Endothelial cell of umbilical vein (primary cell): ENCODE measurements at regions of chr1 and their contacts with region 1.

Region 1: DNA sequence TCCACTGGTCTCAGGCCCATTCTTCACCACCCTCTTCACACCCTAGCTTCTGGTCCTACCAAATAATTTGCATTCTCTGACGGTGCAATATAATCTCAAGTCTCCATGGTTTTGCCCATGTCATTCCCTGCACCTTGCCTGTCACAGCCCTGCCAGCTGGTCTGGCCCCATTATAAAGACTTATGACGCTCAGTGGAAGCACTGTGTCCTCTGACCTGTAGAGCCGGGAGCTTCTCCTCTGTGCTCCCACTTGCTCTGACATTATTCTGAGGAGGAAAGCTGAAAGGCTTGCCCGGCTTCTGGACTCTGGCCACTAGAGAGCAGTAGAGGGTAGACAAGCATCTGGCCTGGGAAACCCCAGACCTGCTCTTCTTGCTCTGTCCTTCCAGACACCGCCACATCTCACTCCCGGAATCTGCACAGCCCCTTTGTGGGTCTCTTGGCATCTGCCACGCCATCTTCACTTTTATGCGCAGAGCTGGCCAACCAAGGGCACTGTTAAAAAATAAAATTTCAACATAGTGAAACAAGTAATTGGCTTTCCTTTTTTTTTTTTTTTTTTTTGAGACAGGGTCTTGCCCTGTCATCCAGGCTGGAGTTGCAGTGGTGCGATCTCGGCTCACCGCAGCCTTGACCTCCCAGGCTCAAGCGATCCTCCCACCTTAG is 44.4 kb downstream of the NENF start:
- DNase-seq: peak; percentile 83
- H3K4me3 ChIP-seq: no peak overlapping the region
- H3K27ac ChIP-seq: no peak overlapping the region
- H3K4me1 ChIP-seq: peaks cover 13% of the 10 kb centered on the region
- H3K27me3 ChIP-seq: peaks cover 0 to 8% of the 10 kb centered on the region in 2 experiments
- CTCF ChIP-seq: peak; percentile 86 to 93
- POLR2A ChIP-seq: no peak

Region 2: GRCh38 chr1:212466898-212467642 is 10.1 kb before region 1 on chr1:
- CTCF ChIA-PET with region 1: interaction called, 12 read pairs
- POLR2A ChIA-PET with region 1: no interaction called
- dilution Hi-C with region 1: no loop called
- intact Hi-C with region 1: no loop called
- DNase-seq: no peak
- H3K4me3 ChIP-seq: no peak overlapping the region
- H3K27ac ChIP-seq: no peak overlapping the region
- H3K4me1 ChIP-seq: no peaks in the 10 kb centered on the region
- H3K27me3 ChIP-seq: peaks cover 0 to 4% of the 10 kb centered on the region in 2 experiments
- CTCF ChIP-seq: no peak
- POLR2A ChIP-seq: no peak

Region 3: GRCh38 chr1:212558693-212559480 is 81.7 kb after region 1 on chr1:
- CTCF ChIA-PET with region 1: interaction called, 31 read pairs
- POLR2A ChIA-PET with region 1: no interaction called
- dilution Hi-C with region 1: no loop called
- intact Hi-C with region 1: loop called (anchors 1 kb)
- DNase-seq: peak; percentile 84
- H3K4me3 ChIP-seq: peak overlapping the region; percentile 58 to 74 (median 68)
- H3K27ac ChIP-seq: peak overlapping the region; percentile 69
- H3K4me1 ChIP-seq: peaks cover 18% of the 10 kb centered on the region
- H3K27me3 ChIP-seq: peaks cover 4 to 5% of the 10 kb centered on the region in 2 experiments
- CTCF ChIP-seq: no peak
- POLR2A ChIP-seq: peak; percentile 43

Region 4: GRCh38 chr1:212608209-212608955 is 131.2 kb after region 1 on chr1 and contains the start of gene ATF3:
- CTCF ChIA-PET with region 1: interaction called, 67 read pairs
- POLR2A ChIA-PET with region 1: interaction called, 42 read pairs
- dilution Hi-C with region 1: no loop called
- intact Hi-C with region 1: loop called (anchors 1 kb)
- DNase-seq: peak; percentile 98
- H3K4me3 ChIP-seq: peak within 1 kb of the TSS; percentile 51 to 77 (median 52)
- H3K27ac ChIP-seq: peak within 1 kb of the TSS; percentile 76
- H3K4me1 ChIP-seq: peaks cover 27% of the 10 kb centered on the region
- H3K27me3 ChIP-seq: peaks cover 38 to 44% of the 10 kb centered on the region in 2 experiments
- CTCF ChIP-seq: no peak
- POLR2A ChIP-seq: peak; percentile 98
- total RNA-seq, gene ATF3: 6.1 and 10.7 TPM in 2 replicates

Region 5: DNA sequence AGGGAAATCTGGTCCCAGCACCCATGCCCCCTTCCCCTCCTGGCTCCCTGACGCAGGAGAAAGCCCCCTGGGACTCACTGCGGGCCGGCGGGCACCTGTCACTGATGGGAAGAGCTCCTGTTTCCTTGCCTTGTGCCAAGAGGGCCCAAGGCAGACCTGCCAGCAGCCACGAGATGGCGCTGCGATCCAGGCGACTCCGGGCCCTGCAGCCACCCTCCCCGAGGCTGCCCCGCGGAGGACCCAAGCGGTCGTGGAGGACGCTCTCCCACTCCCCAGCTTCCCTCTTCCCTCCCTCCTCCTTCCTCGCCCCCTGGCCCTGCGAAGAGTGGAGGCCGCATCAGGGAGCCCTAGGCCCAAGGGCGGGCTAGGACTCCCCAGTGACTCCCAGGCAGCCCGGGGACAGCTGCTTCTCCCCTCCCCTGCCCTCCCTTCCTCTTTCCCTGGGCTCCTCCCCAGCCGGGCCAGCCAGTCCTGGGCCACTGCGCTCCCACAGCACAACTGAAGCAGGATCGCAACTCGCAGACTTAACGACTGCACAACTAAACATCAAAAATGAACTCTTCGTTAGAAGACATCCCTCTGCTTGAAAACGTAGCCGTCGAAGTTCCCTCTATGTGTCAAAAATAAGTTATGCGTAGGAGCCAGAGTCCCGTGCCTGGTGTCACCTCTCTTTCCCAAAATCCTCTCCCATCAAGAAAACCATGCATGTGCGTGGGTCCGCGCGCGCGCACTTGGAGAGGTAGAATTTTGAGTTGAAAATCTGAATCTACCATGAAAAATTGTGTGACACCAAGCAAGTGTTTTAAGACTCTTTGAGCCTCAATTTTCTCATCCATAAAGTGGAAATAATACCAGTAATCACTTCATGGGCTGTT is 188.3 kb after region 1 on chr1:
- CTCF ChIA-PET with region 1: interaction called, 71 read pairs
- POLR2A ChIA-PET with region 1: no interaction called
- dilution Hi-C with region 1: no loop called
- intact Hi-C with region 1: loop called (anchors 1 kb)
- DNase-seq: peak; percentile 81
- H3K4me3 ChIP-seq: peak overlapping the region in 2 of 3 experiments; percentile 39 to 40
- H3K27ac ChIP-seq: peak overlapping the region; percentile 41
- H3K4me1 ChIP-seq: peaks cover 27% of the 10 kb centered on the region
- H3K27me3 ChIP-seq: peaks cover 3 to 4% of the 10 kb centered on the region in 2 experiments
- CTCF ChIP-seq: peak; percentile 90 to 98
- POLR2A ChIP-seq: no peak

Region 6: DNA sequence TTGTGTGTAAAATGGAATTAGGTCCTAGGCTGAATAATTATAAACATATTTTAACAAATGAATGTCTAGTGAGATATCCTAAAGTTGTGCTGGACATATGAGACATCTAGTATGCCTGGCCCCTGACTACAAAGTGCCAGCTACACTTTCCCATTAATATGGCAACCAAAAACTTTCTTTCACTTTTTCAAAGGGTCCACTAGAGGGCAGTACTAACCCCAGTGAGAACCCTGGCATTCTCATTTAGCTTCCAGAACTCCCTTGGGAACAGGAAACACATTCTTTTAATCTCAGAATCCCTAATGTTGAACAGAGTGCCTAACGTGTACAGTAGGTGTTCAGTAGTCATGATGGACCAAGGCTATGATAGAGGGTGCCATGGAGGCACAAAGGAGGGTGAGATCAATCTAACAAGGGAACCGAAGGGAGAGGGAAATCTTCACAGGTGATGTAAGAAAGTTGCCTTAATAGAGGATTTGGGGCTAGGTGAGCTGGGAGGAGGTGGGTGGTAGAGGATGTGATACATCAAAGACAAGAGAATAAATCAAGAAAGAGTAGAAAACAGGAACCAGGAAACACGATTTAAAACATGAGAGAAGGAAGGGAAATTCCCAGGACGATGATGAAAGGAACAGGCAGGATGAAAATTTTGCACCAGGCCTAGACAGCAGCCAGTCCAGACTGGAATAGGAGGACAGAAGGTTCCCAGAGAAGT is 272.8 kb after region 1 on chr1:
- CTCF ChIA-PET with region 1: interaction called, 38 read pairs
- POLR2A ChIA-PET with region 1: interaction called, 3 read pairs
- dilution Hi-C with region 1: no loop called
- intact Hi-C with region 1: loop called (anchors 1 kb)
- DNase-seq: peak; percentile 67
- H3K4me3 ChIP-seq: no peak overlapping the region
- H3K27ac ChIP-seq: peak overlapping the region; percentile 13
- H3K4me1 ChIP-seq: no peaks in the 10 kb centered on the region
- H3K27me3 ChIP-seq: no peaks in the 10 kb centered on the region
- CTCF ChIP-seq: peak; percentile 68 to 79
- POLR2A ChIP-seq: no peak

Region 7: GRCh38 chr1:212968385-212968863 is 491.3 kb after region 1 on chr1:
- CTCF ChIA-PET with region 1: no interaction called
- POLR2A ChIA-PET with region 1: no interaction called
- dilution Hi-C with region 1: no loop called
- intact Hi-C with region 1: no loop called
- DNase-seq: no peak
- H3K4me3 ChIP-seq: no peak overlapping the region
- H3K27ac ChIP-seq: no peak overlapping the region
- H3K4me1 ChIP-seq: no peaks in the 10 kb centered on the region
- H3K27me3 ChIP-seq: peaks cover 0 to 6% of the 10 kb centered on the region in 2 experiments
- CTCF ChIP-seq: no peak
- POLR2A ChIP-seq: no peak

Region 8: GRCh38 chr1:212994926-212995325 is 517.8 kb after region 1 on chr1:
- CTCF ChIA-PET with region 1: interaction called, 31 read pairs
- POLR2A ChIA-PET with region 1: no interaction called
- dilution Hi-C with region 1: no loop called
- intact Hi-C with region 1: loop called (anchors 1 kb)
- DNase-seq: no peak
- H3K4me3 ChIP-seq: no peak overlapping the region
- H3K27ac ChIP-seq: no peak overlapping the region
- H3K4me1 ChIP-seq: no peaks in the 10 kb centered on the region
- H3K27me3 ChIP-seq: no peaks in the 10 kb centered on the region
- CTCF ChIP-seq: no peak
- POLR2A ChIP-seq: no peak